ENCODE measurements at regions of chr3 and their contacts with region 1.

Region 1: GRCh38 chr3:102235679-102236078 is 199.1 kb upstream of the ZPLD1 start:
- DNase-seq: no peak
- ATAC-seq: no peak
- H3K4me3 ChIP-seq: no peak overlapping the region
- H3K27ac ChIP-seq: no peak overlapping the region
- H3K4me1 ChIP-seq: no peaks in the 10 kb centered on the region
- H3K27me3 ChIP-seq: no peaks in the 10 kb centered on the region
- CTCF ChIP-seq: peak in 6 of 9 donors; percentile 11 to 68 (median 40)

Region 2: GRCh38 chr3:102006812-102007485 is 228.7 kb before region 1 on chr3:
- intact Hi-C with region 1: no loop called
- DNase-seq: peak in 1 of 2 donors; percentile 29
- ATAC-seq: peak in 7 of 8 donors; percentile 47 to 92 (median 75)
- H3K4me3 ChIP-seq: no peak overlapping the region
- H3K27ac ChIP-seq: peak overlapping the region in 4 of 10 donors; percentile 6 to 49 (median 19)
- H3K4me1 ChIP-seq: peaks cover 0 to 21% (median 0%) of the 10 kb centered on the region in 9 donors
- H3K27me3 ChIP-seq: no peaks in the 10 kb centered on the region
- CTCF ChIP-seq: no peak

Region 3: DNA sequence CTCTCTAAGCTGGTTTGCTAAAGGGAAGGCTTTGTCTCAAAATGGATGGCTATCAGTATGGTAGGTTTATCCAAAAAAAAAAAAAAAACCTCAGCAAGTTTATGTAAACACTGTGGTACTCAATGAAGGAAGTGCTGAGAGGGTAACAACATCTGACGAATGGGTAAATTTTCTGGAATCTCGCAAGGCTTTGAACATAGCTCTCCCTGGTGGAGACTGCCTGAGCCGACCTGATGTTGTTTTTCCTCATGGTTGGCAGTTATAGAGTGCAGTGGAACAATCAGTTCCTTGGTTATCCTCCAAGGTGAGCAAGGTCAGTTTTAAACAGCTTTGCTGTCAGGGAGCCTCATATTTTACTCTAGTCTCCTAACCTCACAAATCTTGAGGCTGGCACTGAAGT is 293.8 kb after region 1 on chr3:
- intact Hi-C with region 1: loop called in 3 of 10 experiments (anchors 1 to 5 kb)
- DNase-seq: no peak
- ATAC-seq: peak in 6 of 8 donors; percentile 39 to 76 (median 52)
- H3K4me3 ChIP-seq: no peak overlapping the region
- H3K27ac ChIP-seq: no peak overlapping the region
- H3K4me1 ChIP-seq: no peaks in the 10 kb centered on the region
- H3K27me3 ChIP-seq: no peaks in the 10 kb centered on the region
- CTCF ChIP-seq: peak in 6 of 9 donors; percentile 20 to 44 (median 36)

Region 4: GRCh38 chr3:102536456-102536855 is 300.8 kb after region 1 on chr3:
- intact Hi-C with region 1: loop called in 5 of 10 experiments (anchors 1 to 5 kb)
- DNase-seq: no peak
- ATAC-seq: peak in 1 of 8 donors; percentile 45
- H3K4me3 ChIP-seq: no peak overlapping the region
- H3K27ac ChIP-seq: no peak overlapping the region
- H3K4me1 ChIP-seq: no peaks in the 10 kb centered on the region
- H3K27me3 ChIP-seq: peaks cover 0 to 8% (median 0%) of the 10 kb centered on the region in 7 donors
- CTCF ChIP-seq: peak in 7 of 9 donors; percentile 33 to 59 (median 49)

Region 5: DNA sequence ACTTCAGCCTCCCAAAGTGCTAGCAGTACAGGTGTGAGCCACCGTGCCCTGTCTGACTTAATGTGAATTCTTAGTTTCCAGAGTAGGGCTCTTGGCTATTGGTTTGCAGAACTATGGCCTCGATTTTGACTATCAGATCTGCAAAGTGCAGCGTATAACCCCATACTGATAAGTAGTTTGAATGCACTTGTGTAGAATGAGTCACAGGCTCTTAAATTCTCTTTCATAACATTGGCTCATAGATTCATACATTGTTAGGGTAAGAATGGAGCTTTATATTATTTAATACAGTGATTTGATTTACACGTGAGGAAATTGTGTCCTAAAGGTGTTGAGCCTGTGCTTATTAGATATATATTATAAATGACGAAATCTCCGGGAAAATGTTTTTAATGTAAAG is 309.1 kb after region 1 on chr3:
- intact Hi-C with region 1: loop called in 3 of 10 experiments (anchors 5 kb)
- DNase-seq: no peak
- ATAC-seq: no peak
- H3K4me3 ChIP-seq: no peak overlapping the region
- H3K27ac ChIP-seq: no peak overlapping the region
- H3K4me1 ChIP-seq: no peaks in the 10 kb centered on the region
- H3K27me3 ChIP-seq: peaks cover 0 to 17% (median 0%) of the 10 kb centered on the region in 7 donors
- CTCF ChIP-seq: no peak

Region 6: DNA sequence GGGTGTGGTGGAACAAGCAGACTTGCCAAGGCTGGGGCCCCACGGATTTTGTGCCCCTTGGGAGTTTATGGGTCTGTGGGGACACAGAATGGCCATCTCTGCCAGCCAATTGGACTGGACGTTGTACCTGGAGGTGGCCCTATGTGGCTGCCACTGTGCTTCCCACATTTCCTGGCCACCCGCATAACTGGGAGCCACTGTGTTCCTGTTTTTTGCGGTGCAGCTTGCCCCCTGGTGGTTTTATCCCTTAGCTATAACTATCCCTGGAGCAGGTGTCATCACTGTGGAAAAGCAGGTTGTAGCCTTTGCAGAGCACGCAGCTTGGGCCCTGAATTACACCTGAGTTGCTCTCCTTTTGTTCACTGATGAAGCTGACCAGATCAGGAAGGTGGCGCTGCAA is 505.4 kb after region 1 on chr3:
- intact Hi-C with region 1: loop called in 1 of 10 experiments (anchors 5 kb)
- DNase-seq: no peak
- ATAC-seq: peak in 4 of 8 donors; percentile 23 to 59 (median 32)
- H3K4me3 ChIP-seq: no peak overlapping the region
- H3K27ac ChIP-seq: no peak overlapping the region
- H3K4me1 ChIP-seq: peaks cover 0 to 5% (median 0%) of the 10 kb centered on the region in 9 donors
- H3K27me3 ChIP-seq: no peaks in the 10 kb centered on the region
- CTCF ChIP-seq: peak in 5 of 9 donors; percentile 12 to 36 (median 17)

Measured in heart right ventricle (tissue), 16 donors.